Activated CD4-positive, alpha-beta T cell treated with anti-CD3 and anti-CD28 coated beads for 36 hours (primary cell): ENCODE measurements at regions of chr10 and their contacts with region 1.

Region 1: GRCh38 chr10:15316145-15316544 is 54.9 kb downstream of the FAM171A1 start:
- DNase-seq: no peak
- ATAC-seq: no peak
- H3K4me3 Mint-ChIP-seq: no peak overlapping the region
- H3K27ac Mint-ChIP-seq: no peak overlapping the region
- H3K4me1 Mint-ChIP-seq: peaks cover 4% of the 10 kb centered on the region
- H3K27me3 Mint-ChIP-seq: no peaks in the 10 kb centered on the region

Region 2: GRCh38 chr10:14878266-14879054 is 437.7 kb before region 1 on chr10 and contains the start of gene SUV39H2:
- CTCF ChIA-PET with region 1: no interaction called
- POLR2A ChIA-PET with region 1: no interaction called
- intact Hi-C with region 1: no loop called
- DNase-seq: peak; percentile 97
- ATAC-seq: peak; percentile 92
- H3K4me3 Mint-ChIP-seq: peak within 1 kb of the TSS; percentile 97
- H3K27ac Mint-ChIP-seq: peak within 1 kb of the TSS; percentile 93
- H3K4me1 Mint-ChIP-seq: peaks cover 37% of the 10 kb centered on the region
- H3K27me3 Mint-ChIP-seq: no peaks in the 10 kb centered on the region
- total RNA-seq, gene SUV39H2: 42.9 to 51.5 TPM

Region 3: DNA sequence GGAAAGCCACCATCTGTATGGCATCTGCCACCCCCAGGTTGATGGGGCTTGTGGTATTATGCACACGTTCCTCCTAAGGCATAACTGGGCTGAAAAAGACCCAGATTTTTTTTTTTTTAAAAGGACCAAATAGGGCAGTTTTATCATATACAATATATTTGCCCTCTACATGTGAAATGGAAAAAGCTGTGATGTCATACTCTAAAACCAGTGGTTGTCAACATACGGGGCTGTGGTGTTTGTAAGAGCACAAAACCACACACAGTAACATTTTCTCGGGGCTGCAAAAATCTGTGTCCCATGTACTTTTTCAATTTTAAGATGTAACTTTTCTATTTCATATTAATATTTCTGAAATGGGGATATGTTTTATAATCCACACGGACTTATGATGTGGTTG is 20.1 kb after region 1 on chr10:
- CTCF ChIA-PET with region 1: no interaction called
- POLR2A ChIA-PET with region 1: no interaction called
- intact Hi-C with region 1: loop called in 1 of 2 experiments (anchors 2 kb)
- DNase-seq: no peak
- ATAC-seq: peak; percentile 19
- H3K4me3 Mint-ChIP-seq: no peak overlapping the region
- H3K27ac Mint-ChIP-seq: no peak overlapping the region
- H3K4me1 Mint-ChIP-seq: peaks cover 2% of the 10 kb centered on the region
- H3K27me3 Mint-ChIP-seq: peaks cover 2% of the 10 kb centered on the region